ENCODE measurements at regions of chr17 and their contacts with region 1.

Region 1: DNA sequence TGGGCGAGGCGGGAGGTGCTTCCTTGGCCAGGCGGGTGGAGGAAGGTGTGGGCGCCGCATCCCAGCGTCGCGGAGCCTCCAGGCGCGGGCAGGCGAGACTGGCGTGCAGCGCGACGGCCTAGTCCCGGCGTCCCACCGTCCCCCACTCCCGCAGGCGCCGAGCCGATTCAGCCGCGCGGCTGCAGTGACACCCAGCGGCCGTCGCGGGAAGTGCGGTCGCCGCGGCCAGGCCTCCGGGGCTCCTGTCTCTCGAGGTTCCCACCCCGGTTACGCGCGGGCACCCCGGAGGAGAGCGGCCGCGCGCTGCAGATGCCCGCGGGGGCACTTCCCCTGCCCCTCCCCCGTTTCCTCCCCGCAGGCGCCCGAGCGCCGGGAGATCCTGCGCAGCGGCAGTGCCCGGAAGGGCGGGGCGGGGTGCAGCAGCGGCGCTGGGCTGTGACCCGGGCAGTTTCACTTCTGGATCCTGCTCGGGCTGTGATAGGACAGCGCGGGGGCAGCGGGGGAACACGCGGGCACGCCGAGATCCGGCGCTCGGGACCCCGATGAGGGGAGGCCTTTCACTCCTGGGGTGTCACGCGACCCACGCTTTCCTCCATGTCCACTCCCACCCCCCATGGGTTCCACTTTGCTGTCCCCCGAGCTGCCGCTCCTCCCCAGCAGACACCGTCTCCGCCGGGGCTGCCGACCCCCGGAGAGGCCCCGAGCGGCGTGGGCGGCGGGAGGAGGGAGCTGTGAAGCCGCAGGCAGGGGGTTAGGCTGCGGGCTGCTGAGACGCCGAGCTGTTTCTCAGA is 16.6 kb downstream of the GRB7 start:
- DNase-seq: peak; percentile 74 to 98
- H3K4me3 ChIP-seq: peak overlapping the region; percentile 78
- H3K27ac ChIP-seq: peak overlapping the region; percentile 63
- H3K4me1 ChIP-seq: peaks cover 47% of the 10 kb centered on the region
- H3K27me3 ChIP-seq: no peaks in the 10 kb centered on the region
- CTCF ChIP-seq: peak; percentile 87

Region 2: DNA sequence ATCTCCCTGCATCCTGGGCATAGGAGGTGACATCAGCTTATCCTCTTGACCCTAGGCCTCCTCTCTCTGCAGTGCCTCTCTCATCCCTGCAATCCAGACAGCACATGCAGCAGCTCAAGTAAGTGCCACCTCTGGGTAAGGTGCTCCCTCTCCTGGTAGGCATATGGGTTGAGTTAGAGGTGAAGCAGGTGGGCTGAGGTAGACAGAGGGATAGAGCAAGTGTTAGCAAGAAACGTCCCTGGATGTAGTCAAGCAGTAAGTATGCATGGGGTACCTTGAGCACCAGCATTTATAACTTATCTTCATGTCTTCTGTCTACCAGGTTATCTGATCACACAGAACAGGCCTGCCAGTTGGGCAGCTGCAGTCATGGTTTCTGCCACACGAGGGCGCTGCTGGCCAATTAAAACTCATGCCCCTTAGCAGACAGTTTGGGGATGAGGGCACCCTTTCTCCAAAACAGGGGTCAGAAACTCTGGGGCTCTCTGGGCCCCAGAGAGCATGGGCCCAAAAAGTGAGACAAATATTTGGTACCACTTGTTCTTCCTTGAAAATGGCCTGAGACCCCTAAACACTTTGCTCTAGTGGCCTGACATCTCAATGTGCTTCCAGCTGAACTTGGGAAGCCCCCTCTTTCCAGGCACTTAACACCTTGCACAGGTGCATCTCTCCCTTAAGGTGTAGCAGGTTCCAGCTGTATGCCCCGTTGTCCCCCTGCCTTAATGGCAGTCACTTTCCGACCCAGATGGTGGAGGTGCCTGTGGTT is 206.5 kb before region 1 on chr17:
- CTCF ChIA-PET with region 1: no interaction called
- POLR2A ChIA-PET with region 1: no interaction called
- intact Hi-C with region 1: loop called (anchors 5 kb)
- DNase-seq: peak; percentile 49 to 67
- H3K4me3 ChIP-seq: no peak overlapping the region
- H3K27ac ChIP-seq: no peak overlapping the region
- H3K4me1 ChIP-seq: no peaks in the 10 kb centered on the region
- H3K27me3 ChIP-seq: no peaks in the 10 kb centered on the region
- CTCF ChIP-seq: peak; percentile 98

Region 3: DNA sequence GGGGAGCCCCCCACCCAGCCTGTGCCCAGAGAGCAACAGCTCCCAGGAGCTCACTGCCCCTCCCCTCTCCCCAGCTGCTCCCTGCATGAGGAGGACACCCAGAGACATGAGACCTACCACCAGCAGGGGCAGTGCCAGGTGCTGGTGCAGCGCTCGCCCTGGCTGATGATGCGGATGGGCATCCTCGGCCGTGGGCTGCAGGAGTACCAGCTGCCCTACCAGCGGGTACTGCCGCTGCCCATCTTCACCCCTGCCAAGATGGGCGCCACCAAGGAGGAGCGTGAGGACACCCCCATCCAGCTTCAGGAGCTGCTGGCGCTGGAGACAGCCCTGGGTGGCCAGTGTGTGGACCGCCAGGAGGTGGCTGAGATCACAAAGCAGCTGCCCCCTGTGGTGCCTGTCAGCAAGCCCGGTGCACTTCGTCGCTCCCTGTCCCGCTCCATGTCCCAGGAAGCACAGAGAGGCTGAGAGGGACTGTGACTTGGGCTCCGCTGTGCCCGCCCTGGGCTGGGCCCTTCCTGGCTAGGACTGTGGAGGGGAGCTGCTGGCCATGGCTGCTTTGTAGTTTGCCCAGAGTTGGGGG is 88.6 kb before region 1 on chr17:
- CTCF ChIA-PET with region 1: no interaction called
- POLR2A ChIA-PET with region 1: interaction called, 26 read pairs
- intact Hi-C with region 1: no loop called
- DNase-seq: peak in 1 of 2 experiments; percentile 16
- H3K4me3 ChIP-seq: no peak overlapping the region
- H3K27ac ChIP-seq: no peak overlapping the region
- H3K4me1 ChIP-seq: peaks cover 35% of the 10 kb centered on the region
- H3K27me3 ChIP-seq: no peaks in the 10 kb centered on the region
- CTCF ChIP-seq: no peak

Region 4: GRCh38 chr17:39730095-39730921 is 24.0 kb before region 1 on chr17 and contains the start of gene MIEN1:
- CTCF ChIA-PET with region 1: interaction called, 11 read pairs
- POLR2A ChIA-PET with region 1: interaction called, 3 read pairs
- intact Hi-C with region 1: loop called (anchors 1 kb)
- DNase-seq: peak; percentile 71 to 95
- H3K4me3 ChIP-seq: peak within 1 kb of the TSS; percentile 76
- H3K27ac ChIP-seq: peak within 1 kb of the TSS; percentile 69
- H3K4me1 ChIP-seq: peaks cover 24% of the 10 kb centered on the region
- H3K27me3 ChIP-seq: no peaks in the 10 kb centered on the region
- CTCF ChIP-seq: peak; percentile 88
- total RNA-seq, gene MIEN1: 49.2 and 50.8 TPM in 2 replicates

Region 5: GRCh38 chr17:39927101-39927928 is 173.0 kb after region 1 on chr17 and contains the starts of genes LRRC3C and ORMDL3:
- CTCF ChIA-PET with region 1: no interaction called
- POLR2A ChIA-PET with region 1: no interaction called
- intact Hi-C with region 1: loop called (anchors 10 kb)
- DNase-seq: peak; percentile 77 to 88
- H3K4me3 ChIP-seq: peak within 1 kb of the TSS; percentile 98
- H3K27ac ChIP-seq: peak within 1 kb of the TSS; percentile 89
- H3K4me1 ChIP-seq: peaks cover 35% of the 10 kb centered on the region
- H3K27me3 ChIP-seq: no peaks in the 10 kb centered on the region
- CTCF ChIP-seq: no peak
- total RNA-seq, gene LRRC3C: not detected in 2 replicates
- total RNA-seq, gene ORMDL3: 51.1 and 68.1 TPM in 2 replicates

Region 6: GRCh38 chr17:39980351-39981206 is 226.2 kb after region 1 on chr17 and contains the start of gene PSMD3:
- CTCF ChIA-PET with region 1: no interaction called
- POLR2A ChIA-PET with region 1: no interaction called
- intact Hi-C with region 1: loop called (anchors 1 kb)
- DNase-seq: peak; percentile 97 to 98
- H3K4me3 ChIP-seq: peak within 1 kb of the TSS; percentile 100
- H3K27ac ChIP-seq: peak within 1 kb of the TSS; percentile 57
- H3K4me1 ChIP-seq: peaks cover 15% of the 10 kb centered on the region
- H3K27me3 ChIP-seq: no peaks in the 10 kb centered on the region
- CTCF ChIP-seq: peak; percentile 69
- total RNA-seq, gene PSMD3: 93.2 and 130 TPM in 2 replicates

Measured in PC-9 (cell line).